ENCODE measurements at regions of chrX and their contacts with region 1.

Region 1: GRCh38 chrX:43557792-43558191 is 98.3 kb upstream of the MAOA start:
- DNase-seq: peak; percentile 7 to 65 (median 40)
- ATAC-seq: peak; percentile 53
- H3K4me3 ChIP-seq: no peak overlapping the region
- H3K4me3 Mint-ChIP-seq: no peak overlapping the region
- H3K27ac ChIP-seq: no peak overlapping the region
- H3K27ac Mint-ChIP-seq: no peak overlapping the region
- H3K4me1 ChIP-seq: peaks cover 4% of the 10 kb centered on the region in 2 donors
- H3K4me1 Mint-ChIP-seq: peaks cover 0 to 6% (median 0%) of the 10 kb centered on the region in 7 donors
- H3K27me3 ChIP-seq: no peaks in the 10 kb centered on the region
- H3K27me3 Mint-ChIP-seq: no peaks in the 10 kb centered on the region

Region 2: DNA sequence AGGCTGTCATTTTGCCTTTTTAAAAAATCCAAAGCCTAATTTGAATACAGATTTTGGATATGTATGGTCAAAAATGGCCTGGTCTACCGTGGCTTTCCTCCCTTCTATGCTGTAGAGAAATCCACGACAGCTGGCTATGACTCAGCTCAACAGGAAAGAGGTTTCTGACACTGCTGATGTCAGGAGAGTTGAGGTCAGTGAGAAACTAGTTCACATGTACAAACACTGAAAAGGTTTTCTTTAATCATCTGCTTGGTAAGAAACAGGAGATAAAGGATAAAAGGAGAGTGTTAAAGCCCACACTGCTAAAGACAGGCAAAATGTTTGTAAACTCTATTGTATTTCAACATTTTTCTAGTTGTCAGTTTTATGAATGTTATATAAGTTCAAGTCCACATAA is 1996.7 kb before region 1 on chrX:
- CTCF ChIA-PET with region 1: no interaction called
- POLR2A ChIA-PET with region 1: no interaction called
- intact Hi-C with region 1: loop called (anchors 1 to 5 kb)
- DNase-seq: peak in 1 of 9 donors; percentile 24
- ATAC-seq: peak; percentile 82
- H3K4me3 ChIP-seq: no peak overlapping the region
- H3K4me3 Mint-ChIP-seq: peak overlapping the region in 1 of 10 donors; percentile 50
- H3K27ac ChIP-seq: no peak overlapping the region
- H3K27ac Mint-ChIP-seq: peak overlapping the region in 1 of 9 donors; percentile 81
- H3K4me1 ChIP-seq: peaks cover 0 to 25% of the 10 kb centered on the region in 2 donors
- H3K4me1 Mint-ChIP-seq: peaks cover 7 to 47% (median 29%) of the 10 kb centered on the region in 7 donors
- H3K27me3 ChIP-seq: no peaks in the 10 kb centered on the region
- H3K27me3 Mint-ChIP-seq: no peaks in the 10 kb centered on the region

Region 3: GRCh38 chrX:41796577-41796976 is 1761.2 kb before region 1 on chrX:
- CTCF ChIA-PET with region 1: interaction called, 7 read pairs
- POLR2A ChIA-PET with region 1: no interaction called
- intact Hi-C with region 1: loop called (anchors 1 to 5 kb)
- DNase-seq: no peak
- ATAC-seq: no peak
- H3K4me3 ChIP-seq: no peak overlapping the region
- H3K4me3 Mint-ChIP-seq: no peak overlapping the region
- H3K27ac ChIP-seq: no peak overlapping the region
- H3K27ac Mint-ChIP-seq: peak overlapping the region in 2 of 9 donors; percentile 34 to 62
- H3K4me1 ChIP-seq: peaks cover 0 to 4% of the 10 kb centered on the region in 2 donors
- H3K4me1 Mint-ChIP-seq: peaks cover 6 to 34% (median 14%) of the 10 kb centered on the region in 7 donors
- H3K27me3 ChIP-seq: no peaks in the 10 kb centered on the region
- H3K27me3 Mint-ChIP-seq: no peaks in the 10 kb centered on the region

Region 4: DNA sequence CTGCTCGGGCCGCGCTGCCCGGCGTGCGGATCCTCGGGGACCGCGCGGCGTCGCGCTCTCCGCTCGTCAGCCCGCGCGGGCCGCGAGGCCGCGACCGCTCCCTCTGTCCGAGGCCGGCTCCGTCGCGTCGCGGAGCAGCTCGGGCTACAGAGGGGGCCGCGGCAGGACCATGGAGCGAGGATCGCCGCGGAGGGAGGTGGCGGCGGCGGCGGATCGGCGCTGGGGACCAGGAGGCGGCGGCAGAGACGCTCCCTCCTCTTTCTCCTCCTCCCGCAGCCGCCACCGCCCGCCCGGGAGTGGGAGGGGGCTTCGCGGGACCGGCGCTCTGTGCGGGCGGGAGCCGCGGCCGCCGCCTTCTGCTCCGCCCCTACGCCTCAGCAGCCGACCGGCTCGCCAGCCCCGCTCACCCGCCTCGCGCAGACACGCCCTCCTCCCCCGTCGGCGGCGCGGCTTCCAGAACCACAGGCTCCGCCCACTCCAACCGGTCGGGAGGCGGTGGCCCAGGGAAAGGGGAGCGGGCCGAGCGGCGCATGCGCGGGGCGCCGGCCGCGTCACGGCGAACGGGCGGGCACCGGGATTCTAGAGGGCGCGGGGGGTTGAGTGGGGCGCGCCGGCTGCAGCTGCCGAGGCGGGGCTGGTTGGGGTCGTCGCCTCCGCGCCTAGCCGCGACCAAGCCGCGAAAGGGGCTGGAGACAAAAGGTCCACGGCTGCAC is 1634.4 kb before region 1 on chrX and contains the start of gene CASK:
- CTCF ChIA-PET with region 1: no interaction called
- POLR2A ChIA-PET with region 1: no interaction called
- intact Hi-C with region 1: loop called in 1 of 2 experiments (anchors 10 kb)
- DNase-seq: peak; percentile 74 to 91 (median 84)
- ATAC-seq: peak; percentile 92
- H3K4me3 ChIP-seq: peak within 1 kb of the TSS; percentile 78
- H3K4me3 Mint-ChIP-seq: peak within 1 kb of the TSS; percentile 91 to 99 (median 92)
- H3K27ac ChIP-seq: peak within 1 kb of the TSS; percentile 70
- H3K27ac Mint-ChIP-seq: peak within 1 kb of the TSS; percentile 76 to 95 (median 91)
- H3K4me1 ChIP-seq: peaks cover 5% of the 10 kb centered on the region in 2 donors
- H3K4me1 Mint-ChIP-seq: peaks cover 6 to 39% (median 29%) of the 10 kb centered on the region in 7 donors
- H3K27me3 ChIP-seq: no peaks in the 10 kb centered on the region
- H3K27me3 Mint-ChIP-seq: peaks cover 0 to 2% (median 0%) of the 10 kb centered on the region in 5 donors
- total RNA-seq, gene CASK: 31.5 to 72.4 (median 65.0) TPM

Region 5: GRCh38 chrX:43349363-43349762 is 208.4 kb before region 1 on chrX:
- CTCF ChIA-PET with region 1: no interaction called
- POLR2A ChIA-PET with region 1: no interaction called
- intact Hi-C with region 1: loop called (anchors 1 to 2 kb)
- DNase-seq: peak in 7 of 9 donors; percentile 2 to 28 (median 21)
- ATAC-seq: no peak
- H3K4me3 ChIP-seq: no peak overlapping the region
- H3K4me3 Mint-ChIP-seq: no peak overlapping the region
- H3K27ac ChIP-seq: no peak overlapping the region
- H3K27ac Mint-ChIP-seq: no peak overlapping the region
- H3K4me1 ChIP-seq: no peaks in the 10 kb centered on the region
- H3K4me1 Mint-ChIP-seq: peaks cover 0 to 15% (median 8%) of the 10 kb centered on the region in 7 donors
- H3K27me3 ChIP-seq: no peaks in the 10 kb centered on the region
- H3K27me3 Mint-ChIP-seq: no peaks in the 10 kb centered on the region

Region 6: DNA sequence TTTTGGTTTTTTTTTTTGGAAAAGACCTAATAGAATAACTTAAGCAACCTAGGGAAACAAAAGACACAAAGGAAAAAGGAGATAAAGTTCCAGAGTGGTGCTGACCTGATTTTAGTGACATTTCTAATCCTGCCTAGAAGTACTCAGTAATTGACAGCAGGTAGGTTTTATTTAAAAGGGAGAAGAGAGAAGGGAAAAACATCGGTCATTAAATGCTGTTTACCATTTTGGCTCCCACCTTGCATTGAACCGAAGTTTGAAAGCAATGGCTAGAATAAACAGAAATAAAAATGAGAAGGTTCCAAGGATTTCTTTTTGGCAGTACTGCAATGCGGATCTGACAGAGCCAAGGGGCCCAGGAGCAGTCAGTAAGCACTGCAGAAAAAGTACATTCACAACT is 17.5 kb before region 1 on chrX:
- CTCF ChIA-PET with region 1: no interaction called
- POLR2A ChIA-PET with region 1: no interaction called
- intact Hi-C with region 1: no loop called
- DNase-seq: no peak
- ATAC-seq: no peak
- H3K4me3 ChIP-seq: no peak overlapping the region
- H3K4me3 Mint-ChIP-seq: no peak overlapping the region
- H3K27ac ChIP-seq: no peak overlapping the region
- H3K27ac Mint-ChIP-seq: no peak overlapping the region
- H3K4me1 ChIP-seq: no peaks in the 10 kb centered on the region
- H3K4me1 Mint-ChIP-seq: no peaks in the 10 kb centered on the region
- H3K27me3 ChIP-seq: no peaks in the 10 kb centered on the region
- H3K27me3 Mint-ChIP-seq: no peaks in the 10 kb centered on the region

Region 7: DNA sequence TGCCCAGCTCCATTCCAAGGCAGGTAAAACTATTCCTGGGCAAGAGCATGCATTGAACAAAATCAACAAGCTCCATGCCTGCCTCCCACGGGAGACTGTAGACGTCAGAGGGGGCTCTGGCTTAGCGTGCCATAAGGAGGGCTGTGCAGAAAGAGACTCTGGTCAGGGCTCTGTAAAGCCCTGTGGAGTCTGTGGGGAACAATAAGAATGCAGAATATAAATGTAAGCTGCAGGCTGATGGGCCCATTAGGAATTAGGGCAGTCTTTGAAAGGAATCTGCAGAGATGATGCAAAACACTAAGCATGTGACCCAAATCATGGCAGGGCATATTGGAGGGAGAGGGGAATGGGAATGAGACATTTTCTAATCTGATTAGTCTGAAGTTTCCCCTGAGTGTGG is 615.4 kb after region 1 on chrX:
- CTCF ChIA-PET with region 1: no interaction called
- POLR2A ChIA-PET with region 1: no interaction called
- intact Hi-C with region 1: no loop called
- DNase-seq: no peak
- ATAC-seq: no peak
- H3K4me3 ChIP-seq: no peak overlapping the region
- H3K4me3 Mint-ChIP-seq: no peak overlapping the region
- H3K27ac ChIP-seq: no peak overlapping the region
- H3K27ac Mint-ChIP-seq: no peak overlapping the region
- H3K4me1 ChIP-seq: no peaks in the 10 kb centered on the region
- H3K4me1 Mint-ChIP-seq: no peaks in the 10 kb centered on the region
- H3K27me3 ChIP-seq: no peaks in the 10 kb centered on the region
- H3K27me3 Mint-ChIP-seq: no peaks in the 10 kb centered on the region

Region 8: GRCh38 chrX:44244008-44244407 is 686.2 kb after region 1 on chrX:
- CTCF ChIA-PET with region 1: no interaction called
- POLR2A ChIA-PET with region 1: no interaction called
- intact Hi-C with region 1: loop called in 1 of 2 experiments (anchors 5 kb)
- DNase-seq: peak in 6 of 9 donors; percentile 8 to 51 (median 40)
- ATAC-seq: peak; percentile 46
- H3K4me3 ChIP-seq: no peak overlapping the region
- H3K4me3 Mint-ChIP-seq: peak overlapping the region in 2 of 10 donors; percentile 0 to 6
- H3K27ac ChIP-seq: no peak overlapping the region
- H3K27ac Mint-ChIP-seq: peak overlapping the region in 8 of 9 donors; percentile 5 to 79 (median 52)
- H3K4me1 ChIP-seq: peaks cover 5 to 22% of the 10 kb centered on the region in 2 donors
- H3K4me1 Mint-ChIP-seq: peaks cover 10 to 46% (median 30%) of the 10 kb centered on the region in 7 donors
- H3K27me3 ChIP-seq: no peaks in the 10 kb centered on the region
- H3K27me3 Mint-ChIP-seq: no peaks in the 10 kb centered on the region